ENCODE measurements at regions of chr1 and their contacts with region 1.

Region 1: GRCh38 chr1:174999216-174999925 is 376 bp upstream of the CACYBP start:
- DNase-seq: peak; percentile 99
- H3K4me3 ChIP-seq: peak overlapping the region; percentile 95
- H3K27ac ChIP-seq: peak overlapping the region; percentile 92
- H3K4me1 ChIP-seq: peaks cover 41% of the 10 kb centered on the region
- CTCF ChIP-seq: no peak

Region 2: GRCh38 chr1:173867753-173868265 is 1131.6 kb before region 1 on chr1 and contains the start of gene GAS5:
- CTCF ChIA-PET with region 1: no interaction called
- POLR2A ChIA-PET with region 1: no interaction called
- intact Hi-C with region 1: loop called (anchors 5 kb)
- DNase-seq: peak; percentile 99
- H3K4me3 ChIP-seq: peak within 1 kb of the TSS; percentile 98
- H3K27ac ChIP-seq: peak within 1 kb of the TSS; percentile 91
- H3K4me1 ChIP-seq: peaks cover 61% of the 10 kb centered on the region
- CTCF ChIP-seq: no peak
- total RNA-seq, gene GAS5: 899 and 1,026 TPM in 2 replicates

Region 3: DNA sequence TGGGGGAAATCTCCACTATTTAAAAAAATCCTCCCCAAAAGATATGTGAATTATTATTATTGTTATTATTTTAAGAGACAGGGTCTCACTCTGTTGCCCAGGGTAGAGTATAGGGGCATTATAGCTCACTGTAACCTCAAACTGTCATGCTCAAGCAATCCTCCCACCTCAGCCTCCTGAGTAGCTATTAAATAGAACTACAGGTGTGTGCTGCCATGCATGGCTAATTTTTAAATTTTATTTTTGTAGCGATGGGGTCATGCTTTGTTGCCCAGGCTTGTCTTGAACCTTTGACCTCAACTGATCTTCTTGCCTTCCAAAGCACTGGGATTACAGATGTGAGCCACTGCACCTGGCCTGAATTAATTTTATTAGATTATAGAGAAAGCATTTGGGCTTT is 723.3 kb before region 1 on chr1:
- CTCF ChIA-PET with region 1: no interaction called
- POLR2A ChIA-PET with region 1: interaction called, 3 read pairs
- intact Hi-C with region 1: loop called (anchors 5 kb)
- DNase-seq: peak; percentile 95
- H3K4me3 ChIP-seq: peak overlapping the region; percentile 43
- H3K27ac ChIP-seq: peak overlapping the region; percentile 96
- H3K4me1 ChIP-seq: peaks cover 91% of the 10 kb centered on the region
- CTCF ChIP-seq: no peak

Region 4: DNA sequence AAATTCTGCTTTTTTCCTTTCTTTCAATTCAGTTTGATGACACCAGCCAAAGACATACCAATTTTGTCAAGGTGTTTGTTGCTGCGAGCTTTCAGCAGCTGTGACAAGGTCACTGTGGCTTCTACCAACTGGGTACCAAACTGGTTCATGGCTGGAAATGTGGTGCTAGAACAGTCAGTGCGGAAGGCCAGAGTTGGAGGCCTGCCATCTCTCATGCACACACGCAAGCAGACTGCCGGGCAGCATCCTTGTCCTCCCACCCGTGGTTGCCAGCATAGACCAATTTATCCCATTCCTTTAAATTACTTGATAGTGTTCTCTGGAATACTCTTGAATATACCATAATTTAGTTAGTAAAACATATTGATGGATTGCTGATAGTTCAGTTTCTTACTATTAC is 631.5 kb before region 1 on chr1:
- CTCF ChIA-PET with region 1: no interaction called
- POLR2A ChIA-PET with region 1: no interaction called
- intact Hi-C with region 1: no loop called
- DNase-seq: no peak
- H3K4me3 ChIP-seq: no peak overlapping the region
- H3K27ac ChIP-seq: no peak overlapping the region
- H3K4me1 ChIP-seq: peaks cover 8% of the 10 kb centered on the region
- CTCF ChIP-seq: no peak

Region 5: GRCh38 chr1:174743654-174744561 is 255.5 kb before region 1 on chr1:
- CTCF ChIA-PET with region 1: no interaction called
- POLR2A ChIA-PET with region 1: interaction called, 10 read pairs
- intact Hi-C with region 1: no loop called
- DNase-seq: peak; percentile 73
- H3K4me3 ChIP-seq: no peak overlapping the region
- H3K27ac ChIP-seq: no peak overlapping the region
- H3K4me1 ChIP-seq: peaks cover 43% of the 10 kb centered on the region
- CTCF ChIP-seq: peak; percentile 90

Region 6: DNA sequence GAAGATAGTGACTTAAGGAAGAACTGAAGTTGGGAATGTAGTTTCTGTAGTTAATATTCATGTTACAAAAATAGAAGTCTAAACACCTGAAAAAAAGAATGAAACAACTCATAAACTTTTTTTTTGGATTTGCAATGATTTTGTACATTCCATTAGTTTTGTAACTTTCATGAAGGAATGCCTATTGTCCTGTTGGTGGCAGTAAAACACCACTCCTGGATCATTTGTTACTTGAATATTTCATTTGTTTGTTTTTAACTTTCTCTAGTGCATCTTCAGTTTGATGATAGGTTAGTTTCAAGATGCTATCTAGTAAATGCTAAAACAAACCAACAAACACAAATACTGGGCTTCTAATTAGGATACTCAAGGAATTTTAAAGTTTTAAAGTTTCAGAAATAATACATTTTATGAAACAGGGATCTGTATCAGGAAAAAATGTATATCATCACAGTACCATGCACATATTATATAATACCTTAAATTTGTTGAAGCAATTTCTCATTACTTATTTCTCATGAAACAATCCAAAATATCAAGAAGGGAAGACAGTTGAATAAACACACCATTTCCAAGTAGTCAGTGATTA is 229.3 kb before region 1 on chr1:
- CTCF ChIA-PET with region 1: interaction called, 3 read pairs
- POLR2A ChIA-PET with region 1: interaction called, 3 read pairs
- intact Hi-C with region 1: loop called (anchors 1 kb)
- DNase-seq: peak; percentile 80
- H3K4me3 ChIP-seq: no peak overlapping the region
- H3K27ac ChIP-seq: peak overlapping the region; percentile 59
- H3K4me1 ChIP-seq: peaks cover 63% of the 10 kb centered on the region
- CTCF ChIP-seq: peak; percentile 99

Region 7: DNA sequence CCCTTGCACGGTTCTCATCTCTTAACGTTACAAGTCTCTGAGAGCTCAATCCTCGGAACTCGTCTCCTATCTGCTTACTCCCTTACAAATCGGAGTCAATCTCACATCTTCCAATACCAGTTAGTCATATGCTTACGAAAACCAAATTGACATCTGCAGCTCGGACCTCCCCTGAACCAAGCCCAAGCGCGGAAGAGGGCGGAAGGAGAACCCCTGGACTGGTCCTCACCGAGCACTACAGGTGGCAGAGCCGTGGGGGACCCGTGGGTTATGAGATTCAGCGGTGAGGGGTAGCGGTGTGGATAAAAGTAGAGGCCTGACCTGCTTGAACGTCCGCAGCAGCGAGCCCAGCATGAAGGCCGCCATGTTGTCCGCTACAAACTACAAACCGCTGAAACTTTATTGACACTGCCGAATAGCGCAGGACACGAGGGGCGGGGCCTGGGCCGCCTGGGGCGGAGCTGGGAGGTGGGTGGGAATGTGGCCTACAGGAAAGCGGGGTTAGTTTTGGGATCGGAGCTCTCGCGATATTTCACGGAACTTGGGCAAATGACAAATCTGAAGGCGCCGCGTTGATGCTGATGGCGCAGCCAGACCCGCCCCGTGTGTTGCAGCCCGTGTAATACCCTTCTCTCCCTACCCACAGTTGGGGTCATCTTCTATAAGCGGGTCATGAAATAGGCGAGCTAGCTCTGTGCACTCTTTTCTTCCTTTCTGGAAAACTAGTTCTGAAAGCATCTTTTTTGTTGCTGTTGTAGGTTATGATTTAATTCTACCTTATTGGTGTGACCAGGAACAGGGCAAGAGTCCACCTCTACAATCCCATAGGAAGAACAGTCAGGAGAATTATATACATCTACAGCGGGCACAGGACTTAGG is 23.9 kb after region 1 on chr1 and contains the start of gene MRPS14:
- CTCF ChIA-PET with region 1: interaction called, 3 read pairs
- POLR2A ChIA-PET with region 1: interaction called, 27 read pairs
- intact Hi-C with region 1: loop called (anchors 2 kb)
- DNase-seq: peak; percentile 99
- H3K4me3 ChIP-seq: peak within 1 kb of the TSS; percentile 96
- H3K27ac ChIP-seq: peak within 1 kb of the TSS; percentile 64
- H3K4me1 ChIP-seq: peaks cover 18% of the 10 kb centered on the region
- CTCF ChIP-seq: no peak
- total RNA-seq, gene MRPS14: 35.5 and 43.7 TPM in 2 replicates

Measured in OCI-LY7 (cell line).